HEK293 (cell line): ENCODE measurements at regions of chr1 and their contacts with region 1.

Region 1: DNA sequence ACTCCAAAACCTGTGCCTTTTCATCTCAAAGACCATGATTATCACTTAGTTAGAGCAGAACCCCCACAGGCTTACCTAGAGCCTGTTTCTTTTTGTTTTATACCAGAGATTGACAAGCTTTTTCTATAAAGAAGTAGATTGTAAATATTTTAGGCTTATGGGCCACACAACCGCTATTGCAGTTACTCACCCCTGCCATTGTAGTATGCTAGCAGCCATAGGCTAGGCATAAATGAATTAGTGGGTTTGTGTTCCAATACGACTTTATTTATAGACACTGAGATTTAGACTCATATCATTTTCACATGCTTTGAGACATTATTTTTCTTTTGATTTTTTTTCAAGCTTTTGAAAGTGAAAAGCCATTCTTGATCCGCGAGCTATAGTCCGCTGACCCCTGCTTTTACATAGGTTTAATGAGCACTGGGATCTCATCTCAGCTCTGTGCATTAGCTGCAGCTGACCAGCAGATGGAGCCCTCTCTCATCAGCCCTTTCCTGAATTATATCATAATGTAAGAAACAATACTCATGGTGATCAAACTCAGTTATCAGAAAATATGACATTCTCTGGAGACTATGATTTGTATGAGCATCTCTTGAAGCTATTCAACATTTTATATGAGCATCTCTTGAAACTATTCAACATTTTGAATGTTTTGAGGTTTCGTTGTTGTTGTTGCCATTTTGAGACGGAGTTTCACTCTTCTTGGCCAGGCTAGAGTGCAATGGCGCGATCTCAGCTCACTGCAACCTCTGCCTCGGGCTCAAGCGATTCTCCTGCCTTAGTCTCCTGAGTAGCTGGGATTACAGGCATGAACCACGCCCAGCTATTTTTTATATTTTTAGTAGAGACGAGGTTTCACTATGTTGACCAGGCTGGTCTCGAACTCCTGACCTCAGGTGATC is 111.9 kb upstream of the L1TD1 start:
- H3K4me3 ChIP-seq: no peak overlapping the region
- H3K27ac ChIP-seq: no peak overlapping the region
- H3K4me1 ChIP-seq: no peaks in the 10 kb centered on the region
- CTCF ChIP-seq: peak; percentile 47; the same call in 1 of the 2 replicates

Region 2: GRCh38 chr1:62070384-62071011 is 12.2 kb before region 1 on chr1:
- CTCF ChIA-PET with region 1: interaction called, 10 read pairs
- POLR2A ChIA-PET with region 1: no interaction called
- H3K4me3 ChIP-seq: no peak overlapping the region
- H3K27ac ChIP-seq: no peak overlapping the region
- H3K4me1 ChIP-seq: no peaks in the 10 kb centered on the region
- CTCF ChIP-seq: no peak

Region 3: DNA sequence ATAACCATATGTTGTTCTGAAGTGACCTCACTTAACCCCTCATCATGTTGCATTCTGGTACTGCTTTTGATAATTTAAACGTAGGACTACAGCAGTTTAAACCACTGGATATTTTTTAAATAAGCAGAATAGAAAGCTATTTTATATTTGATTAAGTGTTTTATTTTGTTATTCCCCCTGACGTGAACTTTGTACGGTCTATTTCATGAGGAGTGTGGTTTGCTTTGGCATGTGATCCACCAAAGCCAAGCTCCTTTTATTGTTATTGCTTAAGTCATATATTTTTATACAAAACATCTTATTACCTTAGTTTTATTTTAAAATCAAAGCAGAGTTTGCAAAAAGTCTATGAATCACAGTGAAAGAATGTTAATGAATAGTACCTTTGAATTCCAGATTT is 10.6 kb after region 1 on chr1:
- CTCF ChIA-PET with region 1: interaction called, 23 read pairs
- POLR2A ChIA-PET with region 1: no interaction called
- H3K4me3 ChIP-seq: no peak overlapping the region
- H3K27ac ChIP-seq: no peak overlapping the region
- H3K4me1 ChIP-seq: no peaks in the 10 kb centered on the region
- CTCF ChIP-seq: no peak

Region 4: GRCh38 chr1:62144238-62144831 is 61.6 kb after region 1 on chr1:
- CTCF ChIA-PET with region 1: interaction called, 13 read pairs
- POLR2A ChIA-PET with region 1: no interaction called
- H3K4me3 ChIP-seq: no peak overlapping the region
- H3K27ac ChIP-seq: no peak overlapping the region
- H3K4me1 ChIP-seq: no peaks in the 10 kb centered on the region
- CTCF ChIP-seq: no peak

Region 5: DNA sequence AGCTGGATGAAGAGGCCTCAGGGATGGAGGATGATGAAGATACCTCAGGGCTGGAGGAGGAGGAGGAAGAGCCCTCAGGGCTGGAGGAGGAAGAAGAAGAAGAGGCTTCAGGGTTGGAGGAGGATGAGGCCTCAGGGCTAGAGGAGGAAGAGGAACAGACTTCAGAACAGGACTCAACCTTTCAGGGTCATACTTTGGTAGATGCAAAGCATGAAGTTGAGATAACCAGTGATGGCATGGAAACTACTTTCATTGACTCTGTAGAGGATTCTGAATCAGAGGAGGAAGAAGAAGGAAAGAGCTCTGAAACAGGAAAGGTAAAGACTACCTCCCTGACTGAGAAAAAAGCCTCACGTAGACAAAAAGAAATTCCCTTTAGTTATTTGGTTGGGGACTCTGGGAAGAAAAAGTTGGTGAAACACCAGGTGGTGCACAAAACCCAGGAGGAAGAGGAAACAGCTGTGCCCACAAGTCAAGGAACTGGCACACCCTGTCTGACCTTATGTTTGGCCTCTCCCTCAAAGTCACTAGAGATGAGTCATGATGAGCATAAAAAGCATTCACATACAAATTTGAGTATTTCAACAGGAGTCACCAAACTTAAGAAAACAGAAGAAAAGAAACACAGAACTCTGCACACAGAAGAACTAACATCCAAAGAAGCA is 127.4 kb after region 1 on chr1:
- CTCF ChIA-PET with region 1: no interaction called
- POLR2A ChIA-PET with region 1: no interaction called
- H3K4me3 ChIP-seq: no peak overlapping the region
- H3K27ac ChIP-seq: no peak overlapping the region
- H3K4me1 ChIP-seq: no peaks in the 10 kb centered on the region
- CTCF ChIP-seq: no peak